ENCODE measurements at regions of chr13 and their contacts with region 1.

Region 1: GRCh38 chr13:79480954-79481684 is at the start of gene NDFIP2:
- DNase-seq: peak; percentile 94
- ATAC-seq: peak; percentile 69
- H3K4me3 Mint-ChIP-seq: peak within 1 kb of the TSS; percentile 83
- H3K27ac Mint-ChIP-seq: peak within 1 kb of the TSS; percentile 97
- H3K4me1 Mint-ChIP-seq: peaks cover 53% of the 10 kb centered on the region
- H3K27me3 Mint-ChIP-seq: no peaks in the 10 kb centered on the region
- total RNA-seq, gene NDFIP2: 160 to 205 TPM

Region 2: GRCh38 chr13:79128158-79128557 is 353.0 kb before region 1 on chr13:
- CTCF ChIA-PET with region 1: no interaction called
- POLR2A ChIA-PET with region 1: no interaction called
- intact Hi-C with region 1: no loop called
- DNase-seq: no peak
- ATAC-seq: no peak
- H3K4me3 Mint-ChIP-seq: no peak overlapping the region
- H3K27ac Mint-ChIP-seq: no peak overlapping the region
- H3K4me1 Mint-ChIP-seq: peaks cover 3% of the 10 kb centered on the region
- H3K27me3 Mint-ChIP-seq: peaks cover 6% of the 10 kb centered on the region

Region 3: GRCh38 chr13:79393564-79394249 is 87.4 kb before region 1 on chr13:
- CTCF ChIA-PET with region 1: interaction called, 8 read pairs
- POLR2A ChIA-PET with region 1: interaction called, 8 read pairs
- intact Hi-C with region 1: loop called (anchors 1 to 2 kb)
- DNase-seq: peak; percentile 33
- ATAC-seq: peak; percentile 22
- H3K4me3 Mint-ChIP-seq: peak overlapping the region; percentile 33
- H3K27ac Mint-ChIP-seq: peak overlapping the region; percentile 39
- H3K4me1 Mint-ChIP-seq: peaks cover 70% of the 10 kb centered on the region
- H3K27me3 Mint-ChIP-seq: no peaks in the 10 kb centered on the region

Region 4: DNA sequence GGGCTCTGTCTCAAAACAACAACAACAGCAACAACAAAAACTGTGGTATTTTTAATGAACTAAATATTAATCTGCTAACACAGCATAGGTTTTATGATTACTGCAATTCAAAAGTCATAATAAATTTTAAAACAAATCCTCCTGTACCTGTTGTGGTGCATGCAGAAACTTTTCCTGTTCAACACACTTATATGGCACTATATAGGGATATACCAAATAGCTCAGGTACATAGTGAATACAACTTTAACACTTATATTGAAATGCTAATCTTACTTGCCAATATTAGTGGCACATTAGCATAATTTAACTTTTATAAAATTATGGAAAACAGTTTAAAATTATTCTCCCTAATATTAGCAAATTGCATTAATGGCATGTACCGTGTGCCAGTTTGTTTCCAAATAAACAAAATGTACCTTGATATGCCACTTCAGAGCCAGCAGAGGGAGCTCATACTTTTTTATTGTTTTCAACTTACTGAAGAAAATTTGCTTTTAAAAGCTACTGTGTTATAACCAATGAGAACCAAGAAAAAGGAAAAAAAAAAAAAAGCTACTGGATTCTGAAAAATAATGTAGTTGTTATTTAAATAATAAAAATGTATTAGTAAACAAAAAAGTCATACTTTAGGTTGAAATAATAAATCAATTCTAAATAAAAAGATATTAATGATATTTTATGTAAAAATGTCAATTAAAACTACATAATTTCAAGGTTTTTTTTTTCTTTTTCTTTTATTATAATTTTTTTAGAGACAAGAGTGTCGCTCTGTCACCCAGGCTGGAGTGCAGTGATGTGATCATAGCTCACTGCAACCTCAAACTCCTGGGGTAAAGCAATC is 57.1 kb before region 1 on chr13:
- CTCF ChIA-PET with region 1: interaction called, 37 read pairs
- POLR2A ChIA-PET with region 1: interaction called, 6 read pairs
- intact Hi-C with region 1: loop called (anchors 1 kb)
- DNase-seq: no peak
- ATAC-seq: peak; percentile 74
- H3K4me3 Mint-ChIP-seq: no peak overlapping the region
- H3K27ac Mint-ChIP-seq: no peak overlapping the region
- H3K4me1 Mint-ChIP-seq: peaks cover 15% of the 10 kb centered on the region
- H3K27me3 Mint-ChIP-seq: no peaks in the 10 kb centered on the region

Region 5: GRCh38 chr13:79457948-79458347 is 23.2 kb before region 1 on chr13:
- CTCF ChIA-PET with region 1: interaction called, 36 read pairs
- POLR2A ChIA-PET with region 1: interaction called, 58 read pairs
- intact Hi-C with region 1: loop called in 1 of 2 experiments (anchors 1 kb)
- DNase-seq: peak; percentile 44
- ATAC-seq: peak; percentile 83
- H3K4me3 Mint-ChIP-seq: no peak overlapping the region
- H3K27ac Mint-ChIP-seq: no peak overlapping the region
- H3K4me1 Mint-ChIP-seq: peaks cover 47% of the 10 kb centered on the region
- H3K27me3 Mint-ChIP-seq: no peaks in the 10 kb centered on the region

Region 6: GRCh38 chr13:79468819-79469218 is 12.3 kb before region 1 on chr13:
- CTCF ChIA-PET with region 1: interaction called, 6 read pairs
- POLR2A ChIA-PET with region 1: interaction called, 14 read pairs
- intact Hi-C with region 1: loop called in 1 of 2 experiments (anchors 2 kb)
- DNase-seq: no peak
- ATAC-seq: no peak
- H3K4me3 Mint-ChIP-seq: no peak overlapping the region
- H3K27ac Mint-ChIP-seq: no peak overlapping the region
- H3K4me1 Mint-ChIP-seq: peaks cover 13% of the 10 kb centered on the region
- H3K27me3 Mint-ChIP-seq: no peaks in the 10 kb centered on the region

Region 7: DNA sequence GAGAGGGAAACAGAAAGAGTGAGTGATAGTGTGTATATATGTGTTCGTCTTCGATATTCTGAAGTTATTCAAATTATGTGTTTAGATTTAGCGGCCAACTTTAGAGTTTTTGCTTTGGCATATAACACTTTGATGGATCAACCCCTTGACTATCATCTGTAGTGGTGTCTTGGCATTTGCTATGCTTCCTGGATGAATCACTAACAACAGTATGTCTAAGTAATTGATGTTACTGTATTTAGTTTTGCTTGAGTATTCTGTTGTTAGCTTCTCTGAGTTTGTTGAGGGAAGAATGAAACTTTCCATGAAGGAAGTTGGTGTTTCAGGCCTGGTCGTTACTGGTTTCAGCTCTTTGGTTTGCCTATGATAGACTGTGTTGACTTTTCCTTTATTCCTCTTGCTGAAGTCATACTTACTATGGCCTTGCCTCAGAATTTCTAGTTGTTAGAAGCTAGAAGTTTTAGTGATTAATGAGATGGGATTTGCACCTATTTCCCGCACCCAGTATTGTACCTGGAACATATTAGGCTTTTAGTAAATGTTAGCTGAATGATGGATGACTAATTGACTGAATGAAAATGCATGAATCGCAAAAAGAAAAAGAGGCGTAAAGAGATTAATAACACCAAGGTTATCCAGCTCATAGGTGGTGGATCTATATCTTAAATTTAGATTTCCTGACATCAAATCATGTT is 20.6 kb after region 1 on chr13:
- CTCF ChIA-PET with region 1: interaction called, 26 read pairs
- POLR2A ChIA-PET with region 1: interaction called, 22 read pairs
- intact Hi-C with region 1: loop called (anchors 1 kb)
- DNase-seq: no peak
- ATAC-seq: peak; percentile 68
- H3K4me3 Mint-ChIP-seq: peak overlapping the region; percentile 32
- H3K27ac Mint-ChIP-seq: peak overlapping the region; percentile 87
- H3K4me1 Mint-ChIP-seq: peaks cover 90% of the 10 kb centered on the region
- H3K27me3 Mint-ChIP-seq: no peaks in the 10 kb centered on the region

Region 8: GRCh38 chr13:79541426-79542049 is 60.4 kb after region 1 on chr13:
- CTCF ChIA-PET with region 1: interaction called, 25 read pairs
- POLR2A ChIA-PET with region 1: interaction called, 3 read pairs
- intact Hi-C with region 1: loop called (anchors 2 to 5 kb)
- DNase-seq: no peak
- ATAC-seq: no peak
- H3K4me3 Mint-ChIP-seq: no peak overlapping the region
- H3K27ac Mint-ChIP-seq: no peak overlapping the region
- H3K4me1 Mint-ChIP-seq: peaks cover 9% of the 10 kb centered on the region
- H3K27me3 Mint-ChIP-seq: no peaks in the 10 kb centered on the region